A673 (cell line): ENCODE measurements at regions of chrX and their contacts with region 1.

Region 1: GRCh38 chrX:53458082-53458481 is 23.9 kb upstream of the HSD17B10 start:
- DNase-seq: peak; percentile 27
- H3K4me3 ChIP-seq: no peak overlapping the region
- H3K27ac ChIP-seq: no peak overlapping the region
- H3K4me1 ChIP-seq: no peaks in the 10 kb centered on the region
- H3K27me3 ChIP-seq: peaks cover 9% of the 10 kb centered on the region
- CTCF ChIP-seq: peak; percentile 50

Region 2: GRCh38 chrX:53128097-53128749 is 329.9 kb before region 1 on chrX:
- CTCF ChIA-PET with region 1: no interaction called
- POLR2A ChIA-PET with region 1: no interaction called
- intact Hi-C with region 1: no loop called
- DNase-seq: no peak
- H3K4me3 ChIP-seq: no peak overlapping the region
- H3K27ac ChIP-seq: no peak overlapping the region
- H3K4me1 ChIP-seq: no peaks in the 10 kb centered on the region
- H3K27me3 ChIP-seq: peaks cover 7% of the 10 kb centered on the region
- CTCF ChIP-seq: no peak

Region 3: GRCh38 chrX:53224860-53225797 is 233.0 kb before region 1 on chrX and contains the start of gene KDM5C:
- CTCF ChIA-PET with region 1: no interaction called
- POLR2A ChIA-PET with region 1: no interaction called
- intact Hi-C with region 1: no loop called
- DNase-seq: peak; percentile 97
- H3K4me3 ChIP-seq: peak within 1 kb of the TSS; percentile 99
- H3K27ac ChIP-seq: peak within 1 kb of the TSS; percentile 96
- H3K4me1 ChIP-seq: peaks cover 8% of the 10 kb centered on the region
- H3K27me3 ChIP-seq: no peaks in the 10 kb centered on the region
- CTCF ChIP-seq: no peak
- total RNA-seq, gene KDM5C: 177 and 178 TPM in 2 replicates

Region 4: DNA sequence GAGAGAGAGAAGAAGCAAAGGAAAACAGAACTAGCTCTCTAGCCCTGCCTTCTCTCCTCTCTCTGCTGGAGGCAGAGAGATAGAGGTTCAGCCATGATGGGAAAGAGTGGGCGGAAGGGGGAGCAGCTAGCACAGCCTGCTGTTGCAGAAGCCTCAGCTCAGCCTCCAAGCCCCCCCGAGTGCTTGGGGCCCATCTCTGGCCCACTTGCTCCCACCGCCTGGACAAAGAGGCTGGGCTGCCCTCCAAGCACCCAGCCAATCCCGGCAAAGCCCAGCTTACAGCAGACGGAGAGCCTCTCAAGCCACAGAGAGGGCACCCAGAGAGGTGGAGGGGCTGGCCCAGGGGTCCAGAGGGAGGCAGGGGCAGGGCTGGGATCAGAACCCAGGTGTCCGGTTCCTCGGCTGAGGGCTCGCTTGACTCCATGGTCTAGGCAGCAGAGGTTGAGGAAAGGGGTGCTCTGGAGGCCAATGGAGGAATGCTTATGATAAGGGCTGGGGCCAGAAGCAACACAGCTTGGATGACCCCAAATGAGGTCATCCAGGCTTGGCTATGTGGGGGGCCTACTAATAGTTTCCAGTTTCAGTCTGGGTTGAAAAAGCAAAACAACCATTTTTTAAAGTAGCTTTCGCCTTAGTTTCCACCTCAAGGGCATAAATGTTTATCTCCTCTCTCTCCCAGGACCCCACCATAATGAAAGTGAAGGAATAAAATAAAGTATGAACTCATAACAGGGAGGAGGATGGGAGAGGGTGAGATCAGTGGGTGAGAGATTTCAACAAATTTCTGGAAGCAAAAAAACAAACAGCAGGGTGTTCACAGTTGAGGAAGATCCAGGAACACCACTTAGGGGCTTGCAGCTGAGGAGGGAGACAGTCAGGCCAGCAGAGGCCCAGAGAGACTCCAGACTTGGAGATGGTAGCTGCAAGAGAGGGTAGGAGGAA is 151.8 kb before region 1 on chrX:
- CTCF ChIA-PET with region 1: no interaction called
- POLR2A ChIA-PET with region 1: no interaction called
- intact Hi-C with region 1: no loop called
- DNase-seq: no peak
- H3K4me3 ChIP-seq: no peak overlapping the region
- H3K27ac ChIP-seq: no peak overlapping the region
- H3K4me1 ChIP-seq: no peaks in the 10 kb centered on the region
- H3K27me3 ChIP-seq: no peaks in the 10 kb centered on the region
- CTCF ChIP-seq: no peak

Region 5: GRCh38 chrX:53481816-53482465 is 23.9 kb after region 1 on chrX:
- CTCF ChIA-PET with region 1: interaction called, 10 read pairs
- POLR2A ChIA-PET with region 1: no interaction called
- intact Hi-C with region 1: no loop called
- DNase-seq: peak; percentile 74
- H3K4me3 ChIP-seq: no peak overlapping the region
- H3K27ac ChIP-seq: no peak overlapping the region
- H3K4me1 ChIP-seq: no peaks in the 10 kb centered on the region
- H3K27me3 ChIP-seq: no peaks in the 10 kb centered on the region
- CTCF ChIP-seq: peak; percentile 81